ENCODE measurements at regions of chr2 and their contacts with region 1.

Region 1: GRCh38 chr2:203279305-203279704 is 40.5 kb downstream of the CYP20A1 start:
- DNase-seq: no peak
- ATAC-seq: peak; percentile 41; the same call in 1 of the 3 replicates
- H3K4me3 ChIP-seq: no peak overlapping the region
- H3K27ac ChIP-seq: no peak overlapping the region
- H3K4me1 ChIP-seq: no peaks in the 10 kb centered on the region
- H3K27me3 ChIP-seq: no peaks in the 10 kb centered on the region
- CTCF ChIP-seq: no peak
- EP300 ChIP-seq: no peak
- POLR2A ChIP-seq: no peak
- RAD21 ChIP-seq: no peak

Region 2: DNA sequence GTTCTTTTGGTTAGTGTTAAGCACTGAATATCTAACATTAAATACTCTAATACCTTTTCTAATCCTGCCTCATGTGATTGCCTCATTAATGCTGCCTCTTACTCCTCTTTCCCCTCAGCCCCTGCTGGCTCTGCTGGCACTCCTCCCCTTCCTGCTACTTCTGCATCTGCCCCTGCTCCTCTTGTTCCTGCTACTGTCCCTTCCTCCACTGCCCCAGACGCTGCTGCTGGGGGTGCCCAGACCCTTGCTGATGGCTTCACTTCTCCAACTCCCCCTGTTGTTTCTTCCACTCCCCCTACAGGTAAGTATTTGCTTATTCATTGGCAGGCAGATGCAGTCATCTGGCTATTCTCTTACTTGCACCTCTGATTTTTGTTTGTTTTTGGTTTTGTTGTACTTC is 117.4 kb after region 1 on chr2:
- CTCF ChIA-PET with region 1: no interaction called
- POLR2A ChIA-PET with region 1: no interaction called
- in situ Hi-C with region 1: no loop called
- intact Hi-C with region 1: loop called (anchors 10 kb)
- DNase-seq: peak; percentile 31
- ATAC-seq: peak; percentile 85
- H3K4me3 ChIP-seq: no peak overlapping the region
- H3K27ac ChIP-seq: no peak overlapping the region
- H3K4me1 ChIP-seq: no peaks in the 10 kb centered on the region
- H3K27me3 ChIP-seq: no peaks in the 10 kb centered on the region; a peak in 1 of 5 replicates
- CTCF ChIP-seq: peak; percentile 49
- EP300 ChIP-seq: no peak
- POLR2A ChIP-seq: no peak
- RAD21 ChIP-seq: 0 out of 2 replicates have a peak, but pooled peaks have one; percentile 18

Measured in HepG2 (cell line).